Activated T-helper 1 cell treated with anti-CD3 and anti-CD28 coated beads, Interleukin-12 subunit alpha, Interleukin-12 subunit beta, Interleukin-2, Interleukin-4 antibody, amounts not matched to agents 30 ng/mL and 10 ng/mL and 1 ng/mL, durations not matched to agents 14 hours and 24 hours and 36 hours (primary cell): ENCODE measurements at regions of chr3 and their contacts with region 1.

Region 1: DNA sequence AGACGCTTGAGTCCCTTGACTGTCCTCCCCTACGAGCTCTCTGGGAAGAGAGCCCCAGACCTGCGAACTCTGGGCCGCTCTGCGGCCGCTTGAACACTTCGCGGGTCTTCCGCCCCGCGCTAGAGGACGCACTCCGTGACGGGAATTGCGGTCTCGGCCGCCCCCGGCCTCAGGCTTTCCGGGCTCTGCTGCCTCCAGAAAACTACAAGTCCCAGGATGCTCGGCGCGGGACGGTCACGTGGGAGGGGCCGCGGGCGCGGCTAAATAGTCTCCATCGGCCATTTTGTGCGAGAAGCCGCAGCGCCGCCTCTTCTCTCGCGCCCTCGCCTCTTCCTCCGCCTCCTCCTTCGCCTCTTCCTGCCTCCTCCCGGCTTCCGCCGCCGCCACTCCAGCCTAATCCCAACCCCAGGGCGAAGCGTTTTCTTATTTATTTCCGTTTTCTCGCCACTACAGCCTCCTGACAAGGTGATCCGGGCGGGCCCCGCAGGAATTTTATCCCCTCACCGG is at the start of gene EIF1B:
- DNase-seq: peak; percentile 98
- H3K4me3 Mint-ChIP-seq: peak within 1 kb of the TSS; percentile 96
- H3K27ac Mint-ChIP-seq: peak within 1 kb of the TSS; percentile 95
- H3K4me1 Mint-ChIP-seq: peaks cover 28% of the 10 kb centered on the region
- H3K27me3 Mint-ChIP-seq: no peaks in the 10 kb centered on the region
- total RNA-seq, gene EIF1B: 49.1 and 49.6 TPM in 2 replicates

Region 2: GRCh38 chr3:40079203-40079846 is 230.1 kb before region 1 on chr3:
- intact Hi-C with region 1: no loop called
- DNase-seq: no peak
- H3K4me3 Mint-ChIP-seq: no peak overlapping the region
- H3K27ac Mint-ChIP-seq: no peak overlapping the region
- H3K4me1 Mint-ChIP-seq: no peaks in the 10 kb centered on the region
- H3K27me3 Mint-ChIP-seq: no peaks in the 10 kb centered on the region

Region 3: DNA sequence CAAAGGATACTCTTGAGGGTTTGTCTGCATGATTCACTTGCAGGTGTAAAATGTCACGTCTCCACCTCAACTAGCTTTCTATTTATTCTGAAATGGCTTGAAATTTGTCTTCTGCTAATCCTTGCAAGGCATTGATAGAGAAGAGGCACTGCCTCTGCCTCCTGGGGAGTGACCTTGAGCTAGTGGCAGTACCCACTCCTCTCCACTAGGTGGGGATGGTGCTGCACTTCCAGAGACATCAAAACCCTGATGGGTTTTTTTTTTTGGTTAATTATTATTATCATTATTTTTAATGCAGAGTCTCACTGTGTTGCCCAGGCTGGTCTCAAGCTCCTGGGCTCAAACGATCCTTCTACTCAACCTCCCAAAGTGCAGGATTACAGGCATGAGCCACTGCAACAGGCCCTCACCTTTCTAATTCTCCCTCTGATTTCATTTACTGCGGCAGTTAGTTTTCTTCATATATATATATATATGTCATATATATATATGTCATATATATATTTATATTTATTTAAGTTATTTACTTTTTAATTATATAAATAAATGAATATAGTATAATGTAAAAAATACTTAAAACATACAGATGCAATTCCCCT is 117.5 kb before region 1 on chr3:
- intact Hi-C with region 1: loop called (anchors 2 kb)
- DNase-seq: peak; percentile 35
- H3K4me3 Mint-ChIP-seq: no peak overlapping the region
- H3K27ac Mint-ChIP-seq: no peak overlapping the region
- H3K4me1 Mint-ChIP-seq: no peaks in the 10 kb centered on the region
- H3K27me3 Mint-ChIP-seq: peaks cover 4% of the 10 kb centered on the region

Region 4: DNA sequence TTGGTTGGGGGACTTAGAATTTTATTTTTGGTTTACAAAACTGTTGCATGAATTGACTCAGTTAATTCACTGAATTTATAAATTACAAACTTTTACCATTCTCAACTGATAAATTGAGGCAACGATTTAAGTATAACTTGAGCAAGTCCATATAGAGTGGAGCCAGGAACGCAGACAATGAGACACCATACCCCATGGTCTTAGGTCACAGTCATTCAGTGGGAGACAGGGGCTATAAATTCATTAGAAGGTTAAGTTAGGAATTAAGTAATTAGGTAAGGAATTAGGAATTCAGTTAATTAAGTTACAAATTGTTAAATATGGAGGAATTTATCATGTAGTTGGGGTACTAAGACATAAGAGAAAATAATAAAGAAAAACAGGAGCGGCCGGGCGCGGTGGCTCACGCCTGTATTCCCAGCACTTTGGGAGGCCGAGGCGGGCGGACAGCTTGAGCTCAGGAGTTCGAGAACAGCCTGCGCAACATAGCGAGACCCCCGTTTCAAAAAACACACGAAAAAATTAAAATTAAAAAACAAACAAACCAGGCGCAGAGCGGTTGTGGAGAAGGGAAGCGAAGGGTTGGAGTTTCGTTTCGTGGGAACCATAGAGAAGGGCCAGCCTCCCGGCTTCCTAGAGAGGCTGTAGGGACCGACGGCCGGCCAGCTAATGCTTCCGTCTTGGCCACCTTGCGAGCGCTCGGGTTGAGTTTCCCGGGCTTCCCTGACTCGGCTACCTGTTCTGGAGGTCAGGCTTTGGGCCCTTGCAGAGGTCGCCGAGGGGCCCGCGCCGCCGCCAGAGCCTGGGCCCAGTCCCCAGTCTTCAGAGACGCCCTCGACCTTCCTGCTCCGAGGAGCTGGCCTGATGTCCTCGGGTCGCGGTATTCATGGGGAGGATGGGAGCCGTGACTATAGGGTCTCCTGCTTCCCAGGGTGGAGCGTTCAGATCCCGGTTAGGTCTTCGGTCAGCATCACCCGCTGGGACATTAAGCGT is 167.3 kb after region 1 on chr3 and contains the start of gene ZNF619:
- intact Hi-C with region 1: loop called (anchors 5 kb)
- DNase-seq: peak; percentile 31
- H3K4me3 Mint-ChIP-seq: peak within 1 kb of the TSS; percentile 91
- H3K27ac Mint-ChIP-seq: peak within 1 kb of the TSS; percentile 78
- H3K4me1 Mint-ChIP-seq: peaks cover 27% of the 10 kb centered on the region
- H3K27me3 Mint-ChIP-seq: peaks cover 10% of the 10 kb centered on the region
- total RNA-seq, gene ZNF619: 7.1 and 8.2 TPM in 2 replicates